ENCODE measurements at regions of chr6 and their contacts with region 1.

Region 1: GRCh38 chr6:116217069-116217468 is 36.8 kb downstream of the TSPYL4 start:
- DNase-seq: no peak
- ATAC-seq: peak; percentile 63
- H3K4me3 Mint-ChIP-seq: no peak overlapping the region
- H3K27ac Mint-ChIP-seq: no peak overlapping the region
- H3K4me1 Mint-ChIP-seq: no peaks in the 10 kb centered on the region
- H3K27me3 Mint-ChIP-seq: no peaks in the 10 kb centered on the region
- CTCF ChIP-seq: peak; percentile 52

Region 2: GRCh38 chr6:115817161-115817560 is 399.9 kb before region 1 on chr6:
- CTCF ChIA-PET with region 1: interaction called, 11 read pairs
- POLR2A ChIA-PET with region 1: no interaction called
- DNase-seq: no peak
- ATAC-seq: no peak
- H3K4me3 Mint-ChIP-seq: no peak overlapping the region
- H3K27ac Mint-ChIP-seq: no peak overlapping the region
- H3K4me1 Mint-ChIP-seq: peaks cover 17% of the 10 kb centered on the region
- H3K27me3 Mint-ChIP-seq: no peaks in the 10 kb centered on the region; the same call in 1 of the 2 replicates
- CTCF ChIP-seq: no peak

Region 3: GRCh38 chr6:115982453-115982852 is 234.6 kb before region 1 on chr6:
- CTCF ChIA-PET with region 1: no interaction called
- POLR2A ChIA-PET with region 1: no interaction called
- DNase-seq: no peak
- ATAC-seq: no peak
- H3K4me3 Mint-ChIP-seq: no peak overlapping the region
- H3K27ac Mint-ChIP-seq: no peak overlapping the region
- H3K4me1 Mint-ChIP-seq: no peaks in the 10 kb centered on the region
- H3K27me3 Mint-ChIP-seq: no peaks in the 10 kb centered on the region
- CTCF ChIP-seq: no peak

Region 4: DNA sequence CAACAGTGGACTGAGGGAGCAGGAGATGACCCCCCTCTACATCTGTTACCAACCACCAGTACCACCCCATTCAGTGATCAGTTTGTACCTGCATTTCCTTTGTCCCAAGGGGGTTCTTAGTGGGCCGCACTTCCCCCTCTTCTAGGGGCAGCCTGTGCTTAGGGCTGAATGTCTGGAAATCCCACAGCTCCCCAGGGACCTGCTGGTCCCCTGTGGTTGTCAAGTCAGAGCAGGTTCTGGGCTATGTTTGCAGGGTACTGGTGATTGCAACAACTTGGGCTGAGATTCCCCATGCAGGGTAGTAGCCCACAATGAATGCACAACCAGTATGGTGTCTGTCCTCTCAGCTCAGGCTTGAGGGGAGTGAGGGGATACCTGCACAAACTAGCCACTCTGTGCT is 51.5 kb before region 1 on chr6:
- CTCF ChIA-PET with region 1: no interaction called
- POLR2A ChIA-PET with region 1: no interaction called
- DNase-seq: no peak
- ATAC-seq: no peak
- H3K4me3 Mint-ChIP-seq: no peak overlapping the region
- H3K27ac Mint-ChIP-seq: no peak overlapping the region
- H3K4me1 Mint-ChIP-seq: no peaks in the 10 kb centered on the region; the same call in 1 of the 2 replicates
- H3K27me3 Mint-ChIP-seq: no peaks in the 10 kb centered on the region
- CTCF ChIP-seq: no peak

Region 5: DNA sequence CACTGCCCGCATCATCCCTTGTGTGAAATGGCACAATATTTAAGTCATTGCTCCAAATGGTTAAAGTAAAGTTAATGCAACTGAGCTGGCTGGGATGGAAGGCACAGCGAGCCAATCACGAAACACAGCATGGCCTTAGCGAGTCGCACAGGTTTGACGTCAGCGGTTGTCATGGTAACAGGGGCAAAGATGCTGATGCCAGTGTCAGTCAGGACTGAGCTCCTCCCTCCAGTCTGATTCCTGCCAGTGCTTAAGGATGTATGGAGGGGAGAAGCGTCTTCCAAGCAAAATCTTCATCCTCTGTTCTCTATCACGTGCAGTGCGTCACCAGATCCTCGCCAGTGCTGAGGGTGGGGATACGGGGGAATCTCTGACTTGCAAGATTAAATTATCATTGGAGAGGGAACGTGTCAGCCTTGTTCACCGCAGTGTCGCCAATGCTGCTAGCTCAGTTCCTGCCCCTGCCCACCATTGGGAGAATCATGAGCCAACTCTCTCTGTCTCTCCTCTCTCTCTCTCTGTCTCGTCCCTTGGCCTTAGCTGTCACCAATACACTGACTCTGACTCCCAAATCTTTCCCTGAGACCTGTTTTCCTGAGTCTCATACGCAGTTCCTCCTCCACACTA is 12.3 kb after region 1 on chr6:
- CTCF ChIA-PET with region 1: interaction called, 27 read pairs
- POLR2A ChIA-PET with region 1: interaction called, 3 read pairs
- DNase-seq: peak; percentile 95
- ATAC-seq: peak; percentile 99
- H3K4me3 Mint-ChIP-seq: peak overlapping the region; percentile 57
- H3K27ac Mint-ChIP-seq: peak overlapping the region; percentile 95
- H3K4me1 Mint-ChIP-seq: peaks cover 10% of the 10 kb centered on the region
- H3K27me3 Mint-ChIP-seq: no peaks in the 10 kb centered on the region
- CTCF ChIP-seq: no peak

Measured in WTC11 (cell line).